A549 (cell line): ENCODE measurements at regions of chr6 and their contacts with region 1.

Region 1: DNA sequence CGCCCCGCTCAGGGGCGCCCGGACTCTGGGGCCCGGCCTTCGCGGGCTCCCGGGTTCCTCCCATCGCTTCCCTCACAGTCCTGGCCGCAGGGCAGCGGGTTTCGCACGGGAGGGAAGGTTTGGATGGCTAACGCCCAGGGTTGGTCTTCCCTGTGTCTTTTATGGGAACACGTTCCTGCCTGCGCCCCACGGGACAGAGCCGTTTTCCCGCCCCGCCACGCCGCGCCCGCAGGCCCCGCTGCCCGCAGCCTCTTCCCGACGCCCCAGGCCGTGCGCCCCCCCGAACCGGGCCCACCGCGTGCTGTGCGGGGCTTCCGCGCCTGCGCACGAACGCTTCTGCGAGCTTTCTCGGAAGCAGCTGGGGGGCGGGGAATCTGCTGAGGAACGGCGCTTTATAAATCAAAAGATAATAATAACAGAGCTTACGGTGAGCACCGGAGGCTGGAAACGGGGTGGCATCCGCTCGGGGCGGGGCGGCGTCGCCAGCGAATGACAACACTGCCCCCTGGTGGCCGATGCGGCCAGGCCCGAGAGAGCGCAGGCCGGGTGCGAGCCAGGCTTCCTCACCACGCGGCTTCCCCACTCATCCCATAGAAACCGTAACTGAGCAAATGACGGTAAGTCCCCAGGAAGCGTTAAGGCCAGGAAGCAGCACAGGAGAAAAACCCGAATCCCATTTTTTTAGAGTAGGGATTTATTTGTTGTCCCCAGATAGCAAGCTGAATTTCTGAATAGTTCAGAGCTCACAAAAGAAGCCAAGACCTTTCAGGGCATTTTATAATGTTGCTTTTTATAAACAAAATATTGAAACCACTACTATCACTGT is 116.4 kb downstream of the MYLK4 start:
- DNase-seq: peak; percentile 55 to 87
- ATAC-seq: peak; percentile 88 to 93
- H3K4me3 ChIP-seq: peak overlapping the region; percentile 36
- H3K27ac ChIP-seq: peak overlapping the region; percentile 81 to 95
- H3K4me1 ChIP-seq: peaks cover 51% of the 10 kb centered on the region
- CTCF ChIP-seq: peak; percentile 81
- EP300 ChIP-seq: no peak
- POLR2A ChIP-seq: no peak
- RAD21 ChIP-seq: peak; percentile 85 to 97

Region 2: GRCh38 chr6:1596088-1596852 is 1038.1 kb before region 1 on chr6:
- CTCF ChIA-PET with region 1: interaction called, 49 read pairs
- POLR2A ChIA-PET with region 1: no interaction called
- DNase-seq: peak in 1 of 2 experiments; percentile 43
- ATAC-seq: peak; percentile 73 to 92
- H3K4me3 ChIP-seq: no peak overlapping the region
- H3K27ac ChIP-seq: peak overlapping the region in 1 of 2 experiments; percentile 60; a peak in 1 of 6 replicates
- H3K4me1 ChIP-seq: peaks cover 18% of the 10 kb centered on the region
- CTCF ChIP-seq: peak; percentile 81
- EP300 ChIP-seq: no peak
- POLR2A ChIP-seq: no peak
- RAD21 ChIP-seq: peak; percentile 87 to 88

Region 3: GRCh38 chr6:2209226-2209809 is 425.0 kb before region 1 on chr6:
- CTCF ChIA-PET with region 1: interaction called, 14 read pairs
- POLR2A ChIA-PET with region 1: no interaction called
- DNase-seq: peak in 1 of 2 experiments; percentile 54
- ATAC-seq: peak; percentile 84 to 89
- H3K4me3 ChIP-seq: no peak overlapping the region
- H3K27ac ChIP-seq: no peak overlapping the region
- H3K4me1 ChIP-seq: no peaks in the 10 kb centered on the region
- CTCF ChIP-seq: peak; percentile 43
- EP300 ChIP-seq: no peak
- POLR2A ChIP-seq: no peak
- RAD21 ChIP-seq: peak; percentile 43 to 55; a peak in 4 of 5 replicates

Region 4: DNA sequence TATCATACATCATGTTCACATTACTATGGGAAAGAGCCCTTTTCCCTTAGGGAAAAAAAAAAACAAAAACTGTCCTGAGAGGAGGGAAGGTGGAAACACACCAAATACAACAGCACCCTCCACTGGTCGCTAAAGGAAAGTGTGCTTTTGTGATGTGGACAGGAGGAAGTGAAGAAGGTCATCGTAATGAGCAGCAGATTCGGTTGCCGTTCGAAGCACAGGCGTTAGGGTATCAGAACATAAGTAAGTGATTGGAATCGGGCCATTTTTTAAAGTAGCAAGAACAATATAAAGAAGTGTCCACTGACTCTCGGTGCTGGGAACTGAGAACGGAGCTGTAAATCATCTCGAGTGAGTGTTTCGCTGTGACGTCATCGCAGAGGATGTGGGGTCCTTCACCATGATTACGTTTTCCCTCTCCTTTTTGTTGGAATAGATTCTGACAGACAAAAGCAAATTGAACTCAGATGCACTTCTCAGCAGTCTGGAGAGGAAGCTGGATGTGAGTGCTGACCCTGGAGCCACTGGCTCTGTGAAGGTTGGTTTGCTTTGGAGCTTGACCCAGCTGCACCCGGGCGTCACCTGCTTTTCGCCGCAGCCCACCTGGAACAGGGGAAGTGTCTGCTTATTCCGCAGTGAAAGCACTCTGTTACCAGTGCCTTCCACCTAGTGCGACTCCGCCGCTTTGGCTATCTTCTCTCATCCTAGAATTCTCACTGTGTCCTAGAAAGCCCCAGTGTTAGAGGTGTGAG is 185.4 kb before region 1 on chr6:
- CTCF ChIA-PET with region 1: interaction called, 10 read pairs
- POLR2A ChIA-PET with region 1: no interaction called
- DNase-seq: peak; percentile 48 to 75
- ATAC-seq: peak; percentile 88 to 90
- H3K4me3 ChIP-seq: peak overlapping the region; percentile 37
- H3K27ac ChIP-seq: peak overlapping the region; percentile 41 to 64; a peak in 5 of 6 replicates
- H3K4me1 ChIP-seq: peaks cover 5% of the 10 kb centered on the region; the same call in 1 of the 3 replicates
- CTCF ChIP-seq: peak; percentile 61
- EP300 ChIP-seq: no peak
- POLR2A ChIP-seq: no peak
- RAD21 ChIP-seq: peak; percentile 75 to 80

Region 5: GRCh38 chr6:2651961-2652360 is 17.6 kb after region 1 on chr6:
- CTCF ChIA-PET with region 1: interaction called, 11 read pairs
- POLR2A ChIA-PET with region 1: no interaction called
- DNase-seq: no peak
- ATAC-seq: no peak
- H3K4me3 ChIP-seq: no peak overlapping the region
- H3K27ac ChIP-seq: no peak overlapping the region
- H3K4me1 ChIP-seq: no peaks in the 10 kb centered on the region
- CTCF ChIP-seq: no peak
- EP300 ChIP-seq: no peak
- POLR2A ChIP-seq: no peak
- RAD21 ChIP-seq: no peak